HepG2 (cell line): ENCODE measurements at regions of chr6 and their contacts with region 1.

Region 1: DNA sequence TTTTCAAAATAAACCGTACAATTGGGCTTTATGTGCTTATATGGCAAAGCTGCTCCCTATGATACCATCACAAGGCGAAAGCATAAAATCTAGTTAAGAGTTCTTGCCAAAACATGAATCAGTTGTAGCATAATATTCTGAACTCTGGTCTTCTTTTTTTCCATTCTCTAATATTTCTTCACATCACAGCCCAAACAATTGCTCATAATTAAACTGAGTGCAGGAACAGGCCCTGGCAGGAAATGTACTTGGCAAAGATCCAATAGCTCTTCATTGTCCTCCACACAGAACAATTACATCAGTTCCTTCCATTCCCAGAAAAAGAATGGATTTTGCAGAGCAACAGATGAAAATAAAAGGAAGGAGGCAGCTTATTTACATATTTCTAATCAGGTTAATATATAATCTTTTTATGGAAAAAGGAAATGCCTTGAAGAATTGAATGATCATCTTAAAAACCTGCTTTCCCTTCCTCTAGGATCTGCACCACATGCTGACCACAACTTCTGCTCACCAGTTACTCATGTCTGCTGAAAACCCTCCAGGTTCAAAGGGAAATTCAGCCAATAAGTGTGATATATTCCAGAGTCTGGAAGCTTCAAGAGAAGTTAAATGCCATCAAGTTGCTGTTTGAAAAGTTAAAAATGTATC is 123.3 kb upstream of the COL21A1 start:
- DNase-seq: peak; percentile 58
- ATAC-seq: peak; percentile 36
- H3K4me3 ChIP-seq: peak overlapping the region in 2 of 3 experiments; percentile 19 to 27; a peak in 2 of 6 replicates
- H3K27ac ChIP-seq: no peak overlapping the region
- H3K4me1 ChIP-seq: peaks cover 62% of the 10 kb centered on the region
- H3K27me3 ChIP-seq: no peaks in the 10 kb centered on the region
- CTCF ChIP-seq: no peak
- EP300 ChIP-seq: no peak
- POLR2A ChIP-seq: no peak
- RAD21 ChIP-seq: no peak

Region 2: GRCh38 chr6:56324396-56324795 is 46.3 kb before region 1 on chr6:
- CTCF ChIA-PET with region 1: no interaction called
- POLR2A ChIA-PET with region 1: no interaction called
- in situ Hi-C with region 1: no loop called
- intact Hi-C with region 1: no loop called
- DNase-seq: no peak
- ATAC-seq: peak; percentile 35; the same call in 2 of the 3 replicates
- H3K4me3 ChIP-seq: no peak overlapping the region
- H3K27ac ChIP-seq: no peak overlapping the region
- H3K4me1 ChIP-seq: no peaks in the 10 kb centered on the region
- H3K27me3 ChIP-seq: no peaks in the 10 kb centered on the region
- CTCF ChIP-seq: no peak
- EP300 ChIP-seq: no peak
- POLR2A ChIP-seq: no peak
- RAD21 ChIP-seq: no peak

Region 3: GRCh38 chr6:56387621-56388394 is 17.1 kb after region 1 on chr6:
- CTCF ChIA-PET with region 1: no interaction called
- POLR2A ChIA-PET with region 1: interaction called, 3 read pairs
- in situ Hi-C with region 1: no loop called
- intact Hi-C with region 1: loop called (anchors 2 kb)
- DNase-seq: peak; percentile 84
- ATAC-seq: peak; percentile 96
- H3K4me3 ChIP-seq: peak overlapping the region in 1 of 3 experiments; percentile 6; a peak in 1 of 6 replicates
- H3K27ac ChIP-seq: peak overlapping the region; percentile 48
- H3K4me1 ChIP-seq: peaks cover 57% of the 10 kb centered on the region
- H3K27me3 ChIP-seq: no peaks in the 10 kb centered on the region
- CTCF ChIP-seq: no peak; the same call in 1 of the 2 replicates
- EP300 ChIP-seq: peak in 1 of 2 experiments; percentile 59; a peak in 2 of 4 replicates
- POLR2A ChIP-seq: no peak
- RAD21 ChIP-seq: no peak

Region 4: DNA sequence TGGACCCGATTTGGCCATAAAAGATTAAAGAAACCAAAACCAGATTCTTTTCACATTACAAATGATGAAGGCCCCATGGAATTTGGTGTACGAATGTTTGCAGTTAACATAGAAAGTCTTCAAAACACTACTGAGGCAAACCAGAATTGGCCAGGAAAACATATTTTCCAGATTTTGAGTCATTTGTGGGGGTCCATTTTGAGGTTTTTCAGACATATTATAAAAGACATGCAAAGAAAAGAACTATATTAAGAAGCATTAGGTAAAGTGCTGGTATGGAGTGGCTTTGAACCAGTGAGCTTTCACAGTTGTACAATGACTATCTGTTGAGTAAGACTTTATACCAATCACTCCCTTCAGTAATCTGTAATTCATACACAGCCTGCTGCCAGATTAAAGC is 45.6 kb after region 1 on chr6:
- CTCF ChIA-PET with region 1: interaction called, 11 read pairs
- POLR2A ChIA-PET with region 1: interaction called, 3 read pairs
- in situ Hi-C with region 1: loop called (anchors 5 kb)
- intact Hi-C with region 1: loop called (anchors 1 kb)
- DNase-seq: no peak
- ATAC-seq: no peak
- H3K4me3 ChIP-seq: no peak overlapping the region
- H3K27ac ChIP-seq: no peak overlapping the region
- H3K4me1 ChIP-seq: peaks cover 27% of the 10 kb centered on the region
- H3K27me3 ChIP-seq: no peaks in the 10 kb centered on the region
- CTCF ChIP-seq: no peak
- EP300 ChIP-seq: no peak
- POLR2A ChIP-seq: no peak
- RAD21 ChIP-seq: no peak

Region 5: DNA sequence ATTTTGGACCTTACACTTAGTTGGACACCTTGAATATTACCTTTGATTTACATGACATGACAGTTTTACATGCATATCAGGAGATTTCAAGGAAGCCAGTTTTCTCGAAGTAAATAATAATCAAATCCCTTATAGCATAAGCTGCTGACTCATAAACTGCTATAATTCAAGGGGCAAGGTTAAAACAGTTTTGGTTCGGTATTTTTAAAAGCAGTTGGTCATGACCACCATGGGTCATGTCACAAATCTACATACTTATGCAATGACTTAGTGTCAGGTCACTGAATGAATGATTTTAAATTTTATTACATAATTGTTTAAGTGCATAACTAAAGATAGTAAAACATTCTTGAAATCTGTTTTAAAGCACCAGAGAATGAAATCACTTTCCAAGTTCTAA is 114.0 kb after region 1 on chr6:
- CTCF ChIA-PET with region 1: no interaction called
- POLR2A ChIA-PET with region 1: no interaction called
- in situ Hi-C with region 1: no loop called
- intact Hi-C with region 1: loop called (anchors 5 kb)
- DNase-seq: no peak
- ATAC-seq: no peak
- H3K4me3 ChIP-seq: no peak overlapping the region
- H3K27ac ChIP-seq: no peak overlapping the region
- H3K4me1 ChIP-seq: peaks cover 16% of the 10 kb centered on the region
- H3K27me3 ChIP-seq: no peaks in the 10 kb centered on the region
- CTCF ChIP-seq: no peak
- EP300 ChIP-seq: no peak
- POLR2A ChIP-seq: no peak
- RAD21 ChIP-seq: no peak

Region 6: DNA sequence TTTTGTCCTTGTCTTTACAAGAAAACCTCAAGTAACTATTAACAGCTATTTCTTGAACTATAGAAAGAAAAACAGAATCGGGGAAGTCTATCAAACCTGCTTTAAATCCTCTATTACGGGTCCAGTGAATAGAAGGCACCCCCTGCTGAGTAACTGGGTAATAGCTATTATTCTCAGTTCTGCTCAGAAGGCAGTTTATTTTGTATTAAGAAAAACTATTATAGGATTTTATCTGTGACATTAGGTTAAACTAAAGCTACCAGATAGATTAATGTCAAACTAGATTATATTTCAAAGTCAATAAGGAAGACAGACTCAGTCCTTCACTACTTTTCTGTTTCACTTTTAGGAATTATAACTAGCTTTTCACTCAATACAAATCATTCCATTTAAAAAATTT is 178.3 kb after region 1 on chr6:
- CTCF ChIA-PET with region 1: no interaction called
- POLR2A ChIA-PET with region 1: interaction called, 3 read pairs
- in situ Hi-C with region 1: no loop called
- intact Hi-C with region 1: loop called (anchors 1 kb)
- DNase-seq: no peak
- ATAC-seq: peak; percentile 58; the same call in 2 of the 3 replicates
- H3K4me3 ChIP-seq: no peak overlapping the region
- H3K27ac ChIP-seq: no peak overlapping the region
- H3K4me1 ChIP-seq: peaks cover 17% of the 10 kb centered on the region
- H3K27me3 ChIP-seq: no peaks in the 10 kb centered on the region
- CTCF ChIP-seq: peak; percentile 47
- EP300 ChIP-seq: no peak
- POLR2A ChIP-seq: no peak
- RAD21 ChIP-seq: no peak